ENCODE measurements at regions of chr3 and their contacts with region 1.

Region 1: DNA sequence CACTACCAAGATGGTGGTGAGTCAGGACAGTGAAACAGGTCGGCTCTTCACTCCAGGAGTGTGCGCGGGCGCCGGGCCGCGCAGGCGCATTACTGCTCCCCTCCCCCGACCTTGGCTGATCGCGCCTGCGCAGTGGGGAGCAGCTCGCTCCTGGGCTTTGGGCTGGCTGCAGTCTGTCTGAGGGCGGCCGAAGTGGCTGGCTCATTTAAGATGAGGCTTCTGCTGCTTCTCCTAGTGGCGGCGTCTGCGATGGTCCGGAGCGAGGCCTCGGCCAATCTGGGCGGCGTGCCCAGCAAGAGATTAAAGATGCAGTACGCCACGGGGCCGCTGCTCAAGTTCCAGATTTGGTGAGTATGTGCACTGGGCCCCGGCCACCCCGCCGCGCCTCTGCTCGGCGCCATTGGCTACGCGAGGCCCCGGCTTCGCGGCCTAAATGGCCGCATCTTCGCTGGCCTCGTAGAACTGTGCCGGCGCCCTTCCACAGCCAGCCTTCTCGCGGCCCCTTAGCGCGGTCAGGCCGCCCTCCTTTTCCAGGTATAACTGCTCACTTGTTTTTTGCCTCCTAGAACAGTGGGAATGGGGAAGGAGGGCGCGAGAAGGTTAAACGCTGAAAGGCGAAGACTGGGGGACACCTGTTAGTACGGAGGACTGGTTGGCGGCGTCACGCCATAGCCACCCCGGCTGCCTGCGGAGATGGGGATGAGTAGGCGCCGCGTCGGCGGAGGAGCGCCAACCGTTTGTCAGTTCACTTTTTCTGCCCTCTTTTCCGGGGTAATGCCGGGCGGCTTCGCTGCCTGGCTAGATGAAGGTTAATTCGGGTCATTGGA is at the start of gene SELENOT:
- DNase-seq: peak; percentile 95
- H3K4me3 Mint-ChIP-seq: peak within 1 kb of the TSS; percentile 94
- H3K27ac Mint-ChIP-seq: peak within 1 kb of the TSS; percentile 97
- H3K4me1 Mint-ChIP-seq: peaks cover 56% of the 10 kb centered on the region
- H3K27me3 Mint-ChIP-seq: no peaks in the 10 kb centered on the region
- total RNA-seq, gene SELENOT: 119 and 121 TPM in 2 replicates

Region 2: DNA sequence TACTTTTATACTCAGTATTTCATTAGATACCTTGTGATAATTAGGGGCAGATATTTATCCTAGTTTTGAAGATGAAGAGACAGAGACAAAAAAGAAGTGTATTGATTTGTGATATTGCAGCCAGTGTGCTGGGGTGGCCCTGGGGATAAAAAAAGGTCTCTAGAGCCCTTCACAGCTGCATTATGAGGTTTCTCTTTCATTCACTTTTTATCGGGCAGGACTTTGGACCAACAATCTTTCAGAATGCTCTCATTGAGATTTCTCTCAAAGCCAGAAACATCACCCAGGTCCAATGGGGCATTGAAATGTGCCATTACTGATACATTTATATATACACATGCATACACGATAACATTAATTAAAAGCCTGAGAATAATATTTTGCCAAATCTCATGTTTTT is 20.7 kb before region 1 on chr3:
- intact Hi-C with region 1: loop called (anchors 2 kb)
- DNase-seq: no peak
- H3K4me3 Mint-ChIP-seq: no peak overlapping the region
- H3K27ac Mint-ChIP-seq: peak overlapping the region; percentile 42
- H3K4me1 Mint-ChIP-seq: peaks cover 21% of the 10 kb centered on the region
- H3K27me3 Mint-ChIP-seq: no peaks in the 10 kb centered on the region

Region 3: GRCh38 chr3:150703299-150704134 is 100.2 kb after region 1 on chr3 and contains the start of gene ERICH6:
- intact Hi-C with region 1: loop called (anchors 2 kb)
- DNase-seq: peak; percentile 83
- H3K4me3 Mint-ChIP-seq: peak within 1 kb of the TSS; percentile 94
- H3K27ac Mint-ChIP-seq: peak within 1 kb of the TSS; percentile 97
- H3K4me1 Mint-ChIP-seq: peaks cover 25% of the 10 kb centered on the region
- H3K27me3 Mint-ChIP-seq: peaks cover 7% of the 10 kb centered on the region
- total RNA-seq, gene ERICH6: 0.21 and 0.39 TPM in 2 replicates

Region 4: DNA sequence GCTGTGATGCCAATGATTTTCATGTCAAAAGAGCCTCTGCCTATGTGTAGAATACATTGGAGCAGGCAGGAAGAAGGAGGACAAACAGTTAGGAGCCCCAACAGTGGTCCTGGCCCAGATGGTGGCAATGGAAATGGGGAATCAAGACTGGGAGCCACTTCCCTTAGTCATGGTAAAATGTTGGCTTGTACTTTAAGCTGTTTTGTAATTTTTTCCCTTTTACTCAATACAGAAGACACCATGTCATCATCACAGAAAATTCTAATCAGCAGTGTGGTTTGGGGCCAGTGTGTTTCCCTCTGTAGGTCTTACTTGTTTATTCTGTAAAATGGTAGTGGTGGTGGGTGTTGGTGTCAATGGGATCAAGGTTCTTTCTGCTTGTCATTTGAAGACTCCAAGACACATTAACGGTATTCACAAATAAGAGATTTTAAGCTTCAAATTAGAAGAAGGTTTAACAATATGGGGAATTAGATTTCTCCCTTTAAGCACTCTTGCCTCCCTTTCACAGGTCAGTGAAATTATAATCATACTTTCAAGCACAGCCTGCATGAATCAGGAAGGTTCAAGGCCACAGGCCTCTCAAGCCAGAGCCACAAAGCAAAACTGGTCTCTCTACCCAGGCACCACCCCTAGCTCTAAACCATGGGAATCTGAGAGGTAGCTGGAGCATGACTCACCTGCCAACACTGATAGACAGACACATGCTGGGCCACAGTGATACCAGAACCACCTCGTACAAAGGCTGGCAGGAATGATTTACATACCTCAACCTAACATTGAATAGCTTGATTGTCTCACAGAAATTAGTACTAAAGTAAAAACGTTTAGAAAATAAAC is 134.7 kb after region 1 on chr3:
- intact Hi-C with region 1: loop called (anchors 2 kb)
- DNase-seq: no peak
- H3K4me3 Mint-ChIP-seq: peak overlapping the region; percentile 53
- H3K27ac Mint-ChIP-seq: peak overlapping the region; percentile 100
- H3K4me1 Mint-ChIP-seq: peaks cover 91% of the 10 kb centered on the region
- H3K27me3 Mint-ChIP-seq: no peaks in the 10 kb centered on the region